Endothelial cell of umbilical vein (primary cell): ENCODE measurements at regions of chr1 and their contacts with region 1.

Region 1: GRCh38 chr1:43529206-43529731 is 1.4 kb upstream of the PTPRF start:
- DNase-seq: peak; percentile 81
- H3K4me3 ChIP-seq: no peak overlapping the region
- H3K27ac ChIP-seq: no peak overlapping the region
- H3K4me1 ChIP-seq: peaks cover 24% of the 10 kb centered on the region
- H3K27me3 ChIP-seq: no peaks in the 10 kb centered on the region
- CTCF ChIP-seq: peak; percentile 88 to 98
- POLR2A ChIP-seq: no peak

Region 2: GRCh38 chr1:43454266-43455011 is 74.8 kb before region 1 on chr1:
- CTCF ChIA-PET with region 1: interaction called, 12 read pairs
- POLR2A ChIA-PET with region 1: no interaction called
- dilution Hi-C with region 1: no loop called
- intact Hi-C with region 1: loop called (anchors 1 kb)
- DNase-seq: peak; percentile 86
- H3K4me3 ChIP-seq: peak overlapping the region; percentile 19 to 72 (median 67)
- H3K27ac ChIP-seq: peak overlapping the region; percentile 55
- H3K4me1 ChIP-seq: peaks cover 43% of the 10 kb centered on the region
- H3K27me3 ChIP-seq: no peaks in the 10 kb centered on the region
- CTCF ChIP-seq: no peak
- POLR2A ChIP-seq: peak; percentile 88

Region 3: DNA sequence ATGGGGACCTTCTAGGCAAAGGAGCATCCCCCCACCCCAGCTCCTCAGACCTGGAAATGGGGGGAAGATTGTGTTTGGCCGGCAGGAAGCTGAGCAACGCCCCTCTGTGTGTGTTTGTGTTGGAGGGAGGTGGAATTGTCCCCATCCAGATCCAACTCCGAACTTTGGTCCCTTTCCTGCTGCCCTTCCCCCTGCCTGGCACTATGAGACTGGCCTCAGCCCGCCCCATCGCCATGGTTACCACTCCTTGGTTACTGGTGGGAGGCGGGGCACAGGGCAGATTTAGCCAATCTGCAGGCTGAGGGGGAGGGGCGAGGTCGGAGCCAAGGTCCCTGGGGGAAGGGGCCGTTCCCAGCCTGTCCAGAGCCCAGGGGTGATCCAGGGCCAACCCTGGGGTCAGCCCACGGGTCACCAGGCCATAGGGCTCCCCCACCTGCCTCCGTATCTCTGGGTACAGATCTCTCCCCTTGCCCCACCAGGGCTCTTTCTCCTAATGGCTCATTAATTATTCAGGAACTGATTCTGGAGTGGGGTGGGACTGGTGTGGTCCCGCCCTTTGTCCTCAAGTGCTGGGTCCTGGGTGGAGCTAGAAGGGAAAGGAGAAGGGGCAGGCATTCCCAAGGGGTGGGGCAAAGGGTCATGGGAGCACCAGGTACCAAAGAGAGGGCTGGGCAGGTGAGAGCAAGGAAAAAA is 16.6 kb after region 1 on chr1:
- CTCF ChIA-PET with region 1: interaction called, 7 read pairs
- POLR2A ChIA-PET with region 1: no interaction called
- dilution Hi-C with region 1: no loop called
- intact Hi-C with region 1: loop called (anchors 1 kb)
- DNase-seq: peak; percentile 58
- H3K4me3 ChIP-seq: no peak overlapping the region
- H3K27ac ChIP-seq: no peak overlapping the region
- H3K4me1 ChIP-seq: peaks cover 10% of the 10 kb centered on the region
- H3K27me3 ChIP-seq: no peaks in the 10 kb centered on the region
- CTCF ChIP-seq: no peak
- POLR2A ChIP-seq: no peak

Region 4: DNA sequence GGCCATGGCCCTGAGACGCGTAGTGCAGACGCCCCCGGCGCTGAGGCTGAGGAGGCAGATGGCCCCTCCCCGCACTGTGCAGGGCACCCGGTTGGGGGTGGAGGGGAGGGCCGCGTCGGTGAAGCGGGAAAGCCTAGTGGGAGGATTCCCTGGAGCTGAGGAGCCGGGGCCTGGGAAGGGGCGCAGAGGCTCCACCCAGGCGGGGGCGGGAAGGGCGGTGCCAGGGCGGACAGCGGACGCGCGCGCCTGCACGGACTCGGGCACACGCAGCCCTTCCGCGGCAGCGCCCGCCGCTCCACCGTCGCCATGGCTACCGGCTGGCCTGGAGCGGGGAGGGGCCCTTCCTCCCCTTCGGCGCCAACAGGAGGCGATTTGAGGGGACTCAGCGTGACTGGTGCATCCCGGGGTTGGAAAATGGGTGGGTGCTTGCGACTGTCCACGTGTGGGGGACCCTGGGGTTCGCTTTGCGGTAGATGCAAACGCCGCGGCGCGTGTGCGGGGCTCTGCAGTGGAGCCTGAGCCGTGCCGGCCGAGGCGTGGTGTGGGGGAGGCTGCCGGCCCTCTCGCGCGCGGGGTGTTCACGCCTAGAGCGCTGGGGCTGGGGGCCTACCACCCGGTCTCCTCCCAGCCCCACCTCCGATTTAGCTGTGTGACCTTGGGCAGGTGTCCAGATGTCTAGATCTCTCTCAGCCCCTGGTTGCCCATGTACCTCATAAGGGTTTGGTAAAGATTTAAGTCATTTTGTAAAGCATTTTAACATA is 36.5 kb after region 1 on chr1:
- CTCF ChIA-PET with region 1: interaction called, 3 read pairs
- POLR2A ChIA-PET with region 1: no interaction called
- dilution Hi-C with region 1: no loop called
- intact Hi-C with region 1: loop called (anchors 1 kb)
- DNase-seq: peak; percentile 29
- H3K4me3 ChIP-seq: peak overlapping the region in 1 of 3 experiments; percentile 26
- H3K27ac ChIP-seq: no peak overlapping the region
- H3K4me1 ChIP-seq: peaks cover 12% of the 10 kb centered on the region
- H3K27me3 ChIP-seq: no peaks in the 10 kb centered on the region
- CTCF ChIP-seq: no peak
- POLR2A ChIP-seq: no peak

Region 5: GRCh38 chr1:43650310-43651085 is 121.2 kb after region 1 on chr1:
- CTCF ChIA-PET with region 1: interaction called, 18 read pairs
- POLR2A ChIA-PET with region 1: interaction called, 3 read pairs
- dilution Hi-C with region 1: no loop called
- intact Hi-C with region 1: loop called (anchors 1 kb)
- DNase-seq: peak; percentile 94
- H3K4me3 ChIP-seq: peak overlapping the region; percentile 60 to 95 (median 65)
- H3K27ac ChIP-seq: peak overlapping the region; percentile 63
- H3K4me1 ChIP-seq: peaks cover 16% of the 10 kb centered on the region
- H3K27me3 ChIP-seq: peaks cover under 1 to 1% of the 10 kb centered on the region in 2 experiments
- CTCF ChIP-seq: no peak
- POLR2A ChIP-seq: peak; percentile 99

Region 6: GRCh38 chr1:43671626-43672330 is 142.5 kb after region 1 on chr1:
- CTCF ChIA-PET with region 1: no interaction called
- POLR2A ChIA-PET with region 1: no interaction called
- dilution Hi-C with region 1: no loop called
- intact Hi-C with region 1: no loop called
- DNase-seq: no peak
- H3K4me3 ChIP-seq: no peak overlapping the region
- H3K27ac ChIP-seq: no peak overlapping the region
- H3K4me1 ChIP-seq: no peaks in the 10 kb centered on the region
- H3K27me3 ChIP-seq: no peaks in the 10 kb centered on the region
- CTCF ChIP-seq: no peak
- POLR2A ChIP-seq: no peak

Region 7: GRCh38 chr1:43934101-43934985 is 405.1 kb after region 1 on chr1:
- CTCF ChIA-PET with region 1: interaction called, 3 read pairs
- POLR2A ChIA-PET with region 1: no interaction called
- dilution Hi-C with region 1: no loop called
- intact Hi-C with region 1: loop called (anchors 1 kb)
- DNase-seq: peak; percentile 42
- H3K4me3 ChIP-seq: no peak overlapping the region
- H3K27ac ChIP-seq: no peak overlapping the region
- H3K4me1 ChIP-seq: peaks cover 5% of the 10 kb centered on the region
- H3K27me3 ChIP-seq: peaks cover 3 to 9% of the 10 kb centered on the region in 2 experiments
- CTCF ChIP-seq: peak; percentile 63 to 91
- POLR2A ChIP-seq: no peak

Region 8: DNA sequence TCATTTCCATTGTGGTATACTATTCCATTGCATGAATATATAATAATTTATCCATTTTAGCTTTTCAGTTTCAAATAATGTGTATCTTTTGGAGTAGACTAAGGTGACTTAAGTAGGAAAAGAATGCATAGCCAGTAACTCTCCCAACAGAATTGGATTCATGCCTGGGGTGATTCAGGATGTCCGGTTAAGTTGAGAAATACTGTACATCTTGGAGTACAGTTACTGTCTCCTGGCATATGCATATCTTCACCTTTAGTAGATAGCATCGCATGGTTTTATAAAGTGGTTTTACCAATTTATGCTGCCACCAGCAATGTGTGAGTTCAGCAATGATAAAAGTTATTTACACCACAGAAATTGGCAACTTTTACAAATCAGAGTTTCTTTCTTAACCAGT is 520.6 kb after region 1 on chr1:
- CTCF ChIA-PET with region 1: interaction called, 4 read pairs
- POLR2A ChIA-PET with region 1: no interaction called
- dilution Hi-C with region 1: no loop called
- intact Hi-C with region 1: loop called (anchors 5 kb)
- DNase-seq: peak; percentile 12
- H3K4me3 ChIP-seq: no peak overlapping the region
- H3K27ac ChIP-seq: no peak overlapping the region
- H3K4me1 ChIP-seq: peaks cover 26% of the 10 kb centered on the region
- H3K27me3 ChIP-seq: peaks cover 0 to 4% of the 10 kb centered on the region in 2 experiments
- CTCF ChIP-seq: no peak
- POLR2A ChIP-seq: no peak